PC-3 (cell line): ENCODE measurements at regions of chr4 and their contacts with region 1.

Region 1: DNA sequence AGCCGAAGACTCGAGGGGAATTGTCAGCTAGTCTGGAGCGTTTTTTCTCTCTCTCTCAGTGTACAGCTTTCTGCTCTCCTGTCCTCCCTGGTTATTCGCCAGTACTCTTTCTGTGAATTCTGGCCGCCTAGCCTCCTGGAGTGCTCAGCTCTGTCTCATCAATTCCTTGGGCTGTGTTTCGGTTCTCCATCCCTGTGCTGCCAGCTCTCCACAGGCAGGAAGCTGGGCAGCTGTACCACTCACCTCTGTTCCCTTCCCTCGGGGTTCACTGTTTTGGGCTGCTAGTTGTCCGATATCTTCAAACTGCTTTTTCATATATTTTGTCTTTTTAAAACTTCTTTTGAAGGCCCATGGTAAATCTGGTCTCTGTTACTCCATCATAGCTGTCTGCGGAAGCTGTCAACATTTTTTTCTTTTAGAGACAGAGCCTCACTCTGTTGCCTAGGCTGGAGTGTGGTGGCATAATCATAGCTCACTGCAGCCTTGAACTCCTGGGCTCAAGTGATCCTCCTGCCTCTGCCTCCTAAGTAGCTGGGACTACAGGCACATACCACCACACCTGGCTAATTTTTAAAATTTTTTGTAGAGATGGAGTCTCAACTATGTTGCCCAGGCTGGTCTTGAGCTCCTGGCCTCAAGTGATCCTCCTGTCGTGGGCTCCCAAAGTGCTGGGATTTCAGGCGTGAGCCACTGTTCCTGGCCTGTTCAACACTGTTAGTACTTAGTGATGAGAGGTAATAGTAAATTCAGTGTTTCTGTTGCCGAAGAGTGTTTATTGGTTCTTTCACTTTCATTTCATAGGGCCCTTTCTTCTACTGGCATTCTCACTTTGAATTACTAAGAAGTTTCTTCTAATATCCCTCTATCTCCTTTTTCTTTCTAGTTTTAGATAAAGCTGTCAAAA is 18.6 kb downstream of the ZCCHC4 start:
- DNase-seq: no peak
- ATAC-seq: no peak
- H3K4me3 ChIP-seq: no peak overlapping the region
- H3K27ac ChIP-seq: no peak overlapping the region
- H3K4me1 ChIP-seq: no peaks in the 10 kb centered on the region
- H3K27me3 ChIP-seq: no peaks in the 10 kb centered on the region
- CTCF ChIP-seq: no peak

Region 2: GRCh38 chr4:25320773-25321172 is 10.4 kb before region 1 on chr4:
- CTCF ChIA-PET with region 1: no interaction called
- POLR2A ChIA-PET with region 1: interaction called, 11 read pairs
- intact Hi-C with region 1: no loop called
- DNase-seq: peak; percentile 80
- ATAC-seq: peak; percentile 73
- H3K4me3 ChIP-seq: peak overlapping the region; percentile 46
- H3K27ac ChIP-seq: peak overlapping the region; percentile 84
- H3K4me1 ChIP-seq: peaks cover 27% of the 10 kb centered on the region
- H3K27me3 ChIP-seq: no peaks in the 10 kb centered on the region
- CTCF ChIP-seq: no peak